ENCODE measurements at regions of chr13 and their contacts with region 1.

Region 1: GRCh38 chr13:91133941-91134802 is 213.3 kb upstream of the MIR17HG start:
- DNase-seq: peak; percentile 57
- H3K4me3 Mint-ChIP-seq: no peak overlapping the region
- H3K27ac Mint-ChIP-seq: no peak overlapping the region
- H3K4me1 Mint-ChIP-seq: no peaks in the 10 kb centered on the region
- H3K27me3 Mint-ChIP-seq: no peaks in the 10 kb centered on the region

Region 2: GRCh38 chr13:91185294-91185863 is 51.2 kb after region 1 on chr13:
- CTCF ChIA-PET with region 1: interaction called, 3 read pairs
- intact Hi-C with region 1: loop called (anchors 2 kb)
- DNase-seq: no peak
- H3K4me3 Mint-ChIP-seq: no peak overlapping the region
- H3K27ac Mint-ChIP-seq: no peak overlapping the region
- H3K4me1 Mint-ChIP-seq: no peaks in the 10 kb centered on the region
- H3K27me3 Mint-ChIP-seq: peaks cover 6% of the 10 kb centered on the region

Region 3: DNA sequence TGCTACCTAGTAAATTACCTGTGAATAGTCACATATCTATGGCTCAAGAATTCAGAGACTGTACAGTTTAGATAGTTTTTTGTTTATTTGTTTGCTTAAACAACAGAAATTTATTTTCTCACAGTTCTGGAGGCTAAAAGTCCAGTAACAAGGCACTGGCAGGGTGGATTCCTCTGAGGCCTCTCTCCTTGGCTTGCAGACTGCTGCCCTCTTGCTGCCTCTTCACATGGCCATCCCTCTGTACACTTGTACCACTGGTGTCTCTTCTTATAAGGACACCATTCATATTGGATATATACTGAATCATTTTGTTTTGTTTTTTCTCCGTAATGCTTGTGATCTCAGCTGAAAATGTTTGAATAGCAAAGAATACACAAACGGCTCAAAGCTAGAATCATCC is 156.9 kb after region 1 on chr13:
- CTCF ChIA-PET with region 1: no interaction called
- intact Hi-C with region 1: loop called (anchors 1 kb)
- DNase-seq: no peak
- H3K4me3 Mint-ChIP-seq: no peak overlapping the region
- H3K27ac Mint-ChIP-seq: no peak overlapping the region
- H3K4me1 Mint-ChIP-seq: no peaks in the 10 kb centered on the region
- H3K27me3 Mint-ChIP-seq: no peaks in the 10 kb centered on the region

Region 4: DNA sequence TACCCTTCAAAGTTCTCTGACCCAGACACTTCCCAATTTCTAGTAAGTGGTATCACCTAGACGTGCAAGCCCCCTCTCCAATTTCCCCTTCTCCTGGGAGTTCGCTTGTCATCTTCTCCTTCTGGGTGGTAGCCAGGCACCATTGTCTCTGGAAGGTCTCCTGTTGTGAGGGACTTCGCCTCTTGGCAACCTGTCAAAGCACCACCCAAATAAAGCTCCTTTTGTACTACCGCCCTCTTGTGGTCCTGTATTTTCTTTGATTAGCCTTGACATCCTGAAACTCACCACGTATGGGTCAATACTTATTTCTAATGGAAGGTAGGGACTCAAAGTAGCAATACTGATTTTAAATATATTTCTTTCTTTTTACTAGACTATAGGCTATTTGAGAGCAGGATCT is 272.4 kb after region 1 on chr13:
- CTCF ChIA-PET with region 1: no interaction called
- intact Hi-C with region 1: loop called (anchors 1 kb)
- DNase-seq: peak; percentile 24
- H3K4me3 Mint-ChIP-seq: no peak overlapping the region
- H3K27ac Mint-ChIP-seq: no peak overlapping the region
- H3K4me1 Mint-ChIP-seq: no peaks in the 10 kb centered on the region
- H3K27me3 Mint-ChIP-seq: peaks cover 11% of the 10 kb centered on the region

Region 5: GRCh38 chr13:91722267-91722884 is 588.2 kb after region 1 on chr13:
- CTCF ChIA-PET with region 1: no interaction called
- intact Hi-C with region 1: loop called (anchors 1 kb)
- DNase-seq: no peak
- H3K4me3 Mint-ChIP-seq: no peak overlapping the region
- H3K27ac Mint-ChIP-seq: no peak overlapping the region
- H3K4me1 Mint-ChIP-seq: no peaks in the 10 kb centered on the region
- H3K27me3 Mint-ChIP-seq: peaks cover 2% of the 10 kb centered on the region

Measured in activated naive CD4-positive, alpha-beta T cell treated with anti-CD3 and anti-CD28 coated beads for 36 hours (primary cell).